Endothelial cell of umbilical vein (primary cell): ENCODE measurements at regions of chr11 and their contacts with region 1.

Region 1: DNA sequence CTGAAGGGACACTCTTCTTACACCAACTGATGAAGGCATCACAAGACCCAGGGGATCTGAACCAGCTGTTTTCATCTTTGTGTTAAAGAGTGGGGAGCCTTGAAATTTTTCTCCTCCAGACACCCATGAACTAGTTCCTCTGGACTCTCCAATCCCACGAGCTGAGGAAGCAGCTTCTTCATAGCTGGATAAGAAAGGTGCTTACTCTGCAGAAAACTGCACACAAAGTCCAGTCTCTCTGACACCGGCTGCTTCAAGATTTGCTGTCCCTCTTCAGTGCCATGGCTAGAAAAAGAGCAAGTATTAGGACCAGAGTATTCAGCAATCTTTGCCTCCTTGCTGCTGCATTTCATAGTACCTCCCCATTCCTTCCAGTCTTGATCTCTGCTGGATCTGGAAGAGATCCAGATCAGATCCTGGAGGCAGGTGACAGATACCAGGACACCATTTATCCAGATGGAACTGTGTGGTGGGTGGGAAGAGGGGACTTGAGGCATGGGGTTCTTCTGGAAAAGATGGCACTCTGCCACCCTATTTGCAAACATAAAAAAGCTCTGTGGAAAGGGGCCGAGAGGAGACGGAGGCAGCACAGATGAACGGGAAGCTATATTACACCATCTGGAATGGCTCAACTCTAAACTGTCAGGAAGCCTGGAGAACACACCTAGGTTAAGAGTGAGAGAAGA is 25.5 kb downstream of the IL18BP start:
- DNase-seq: no peak
- H3K4me3 ChIP-seq: no peak overlapping the region
- H3K27ac ChIP-seq: no peak overlapping the region
- H3K4me1 ChIP-seq: peaks cover 6% of the 10 kb centered on the region
- H3K27me3 ChIP-seq: no peaks in the 10 kb centered on the region
- CTCF ChIP-seq: no peak
- POLR2A ChIP-seq: no peak

Region 2: GRCh38 chr11:72080256-72080974 is 56.2 kb after region 1 on chr11 and contains the starts of genes LRRC51 and NUMA1:
- CTCF ChIA-PET with region 1: interaction called, 93 read pairs
- POLR2A ChIA-PET with region 1: no interaction called
- dilution Hi-C with region 1: loop called (anchors 10 kb)
- intact Hi-C with region 1: no loop called
- DNase-seq: peak; percentile 100
- H3K4me3 ChIP-seq: peak within 1 kb of the TSS; percentile 64 to 82 (median 78)
- H3K27ac ChIP-seq: peak within 1 kb of the TSS; percentile 94
- H3K4me1 ChIP-seq: peaks cover 28% of the 10 kb centered on the region
- H3K27me3 ChIP-seq: no peaks in the 10 kb centered on the region
- CTCF ChIP-seq: no peak
- POLR2A ChIP-seq: no peak
- total RNA-seq, gene LRRC51: 3.8 and 6.1 TPM in 2 replicates
- total RNA-seq, gene NUMA1: 164 and 168 TPM in 2 replicates

Region 3: DNA sequence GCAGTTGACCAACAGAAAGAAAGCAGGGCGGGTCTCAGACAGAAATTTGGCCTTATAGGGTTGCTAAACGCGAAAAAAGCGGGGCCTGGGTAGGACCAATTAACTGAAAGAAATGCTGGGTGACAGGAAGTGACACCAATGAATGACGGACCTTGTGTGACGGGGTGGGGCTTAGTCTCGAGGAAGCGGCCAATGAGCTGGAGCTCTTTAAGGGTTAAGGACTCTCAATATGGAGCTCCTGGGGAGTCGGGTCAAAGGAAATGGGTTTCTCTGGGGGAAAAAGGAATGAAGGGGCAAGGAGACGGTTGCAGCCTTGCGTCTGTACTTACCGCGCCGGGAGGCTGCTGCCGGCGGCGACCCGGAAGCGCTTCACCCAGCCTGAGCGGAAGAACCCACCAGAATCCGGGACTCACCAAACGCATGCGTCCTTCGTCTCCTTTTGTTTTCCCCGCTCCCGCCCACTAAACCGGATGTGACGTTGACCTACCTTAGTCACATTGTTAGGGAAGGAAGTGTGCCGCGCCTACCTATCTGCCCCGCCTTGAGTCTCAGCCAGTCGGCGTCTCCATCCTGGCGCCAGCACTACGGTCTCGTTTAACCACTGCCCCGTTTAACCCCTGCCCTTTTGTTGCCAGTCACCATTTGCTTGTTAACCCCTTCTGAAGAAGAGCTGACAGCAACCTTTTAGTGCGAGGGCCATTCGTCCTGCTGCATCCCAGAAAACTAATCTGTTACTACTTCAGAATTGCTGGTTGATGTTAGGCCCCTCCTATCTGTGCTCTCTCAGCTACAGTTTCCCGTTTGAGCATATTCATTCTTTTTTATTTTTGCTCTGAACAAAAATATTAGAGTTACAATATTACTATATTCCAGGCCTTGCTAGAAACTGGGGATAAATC is 88.4 kb after region 1 on chr11 and contains the start of gene ANAPC15:
- CTCF ChIA-PET with region 1: interaction called, 19 read pairs
- POLR2A ChIA-PET with region 1: interaction called, 3 read pairs
- dilution Hi-C with region 1: no loop called
- intact Hi-C with region 1: no loop called
- DNase-seq: peak; percentile 100
- H3K4me3 ChIP-seq: peak within 1 kb of the TSS; percentile 14 to 69 (median 53)
- H3K27ac ChIP-seq: peak within 1 kb of the TSS; percentile 90
- H3K4me1 ChIP-seq: peaks cover 14% of the 10 kb centered on the region
- H3K27me3 ChIP-seq: peaks cover 0 to 3% of the 10 kb centered on the region in 2 experiments
- CTCF ChIP-seq: no peak
- POLR2A ChIP-seq: peak; percentile 99
- total RNA-seq, gene ANAPC15: 67.0 and 72.4 TPM in 2 replicates

Region 4: GRCh38 chr11:72179804-72180396 is 155.7 kb after region 1 on chr11:
- CTCF ChIA-PET with region 1: interaction called, 54 read pairs
- POLR2A ChIA-PET with region 1: no interaction called
- dilution Hi-C with region 1: no loop called
- intact Hi-C with region 1: loop called (anchors 1 kb)
- DNase-seq: no peak
- H3K4me3 ChIP-seq: no peak overlapping the region
- H3K27ac ChIP-seq: no peak overlapping the region
- H3K4me1 ChIP-seq: no peaks in the 10 kb centered on the region
- H3K27me3 ChIP-seq: peaks cover 11% of the 10 kb centered on the region in 2 experiments
- CTCF ChIP-seq: no peak
- POLR2A ChIP-seq: no peak

Region 5: DNA sequence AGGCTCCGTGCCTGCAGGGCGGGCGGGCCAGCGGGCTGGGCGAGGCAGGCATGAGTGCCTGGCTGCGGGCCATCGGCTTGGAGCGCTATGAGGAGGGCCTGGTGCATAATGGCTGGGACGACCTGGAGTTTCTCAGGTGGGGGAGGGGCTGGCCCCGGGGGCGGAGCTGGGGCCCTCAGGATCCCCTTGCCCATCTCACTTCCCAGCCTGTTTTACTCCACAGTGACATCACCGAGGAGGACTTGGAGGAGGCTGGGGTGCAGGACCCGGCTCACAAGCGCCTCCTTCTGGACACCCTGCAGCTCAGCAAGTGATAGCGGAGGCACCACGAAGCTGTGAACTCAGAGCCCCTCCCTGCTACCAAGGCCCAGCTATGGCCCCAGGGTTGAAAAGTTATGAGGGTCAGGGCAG is 213.8 kb after region 1 on chr11:
- CTCF ChIA-PET with region 1: interaction called, 13 read pairs
- POLR2A ChIA-PET with region 1: no interaction called
- dilution Hi-C with region 1: no loop called
- intact Hi-C with region 1: loop called (anchors 1 kb)
- DNase-seq: peak; percentile 51
- H3K4me3 ChIP-seq: no peak overlapping the region
- H3K27ac ChIP-seq: no peak overlapping the region
- H3K4me1 ChIP-seq: peaks cover 12% of the 10 kb centered on the region
- H3K27me3 ChIP-seq: peaks cover 28 to 37% of the 10 kb centered on the region in 2 experiments
- CTCF ChIP-seq: peak; percentile 77 to 85
- POLR2A ChIP-seq: peak; percentile 45